SK-MEL-5 (cell line): ENCODE measurements at regions of chr1 and their contacts with region 1.

Region 1: GRCh38 chr1:241519308-241520079 is at the start of gene FH:
- DNase-seq: peak; percentile 99
- total RNA-seq, gene FH: 68.6 and 79.1 TPM in 2 replicates

Region 2: DNA sequence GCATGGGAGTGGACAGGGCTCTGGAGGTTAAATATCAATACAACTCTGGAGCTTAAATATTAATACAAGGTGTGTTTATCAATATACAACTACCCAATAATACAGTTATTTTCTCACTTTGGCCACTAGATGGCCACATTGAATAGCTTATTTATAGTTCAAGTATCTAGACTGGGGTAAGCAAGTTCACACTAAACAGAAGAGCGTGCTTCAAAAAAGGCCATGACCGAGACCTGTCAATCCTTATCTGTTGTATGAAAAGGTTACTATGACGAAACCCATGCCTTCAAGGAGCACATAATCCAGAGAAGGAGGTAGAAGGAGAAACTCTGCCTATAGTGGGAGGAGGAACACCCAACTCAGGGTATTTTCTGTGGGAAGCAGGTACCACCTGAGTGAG is 91.6 kb after region 1 on chr1:
- in situ Hi-C with region 1: loop called (anchors 10 kb)
- DNase-seq: peak; percentile 86